Caco-2 (cell line): ENCODE measurements at regions of chr3 and their contacts with region 1.

Region 1: GRCh38 chr3:2770451-2770850 is 339.7 kb downstream of the IL5RA start:
- DNase-seq: peak; percentile 42 to 60
- H3K4me3 ChIP-seq: no peak overlapping the region
- H3K4me3 Mint-ChIP-seq: no peak overlapping the region
- H3K27ac Mint-ChIP-seq: peak overlapping the region; percentile 37
- H3K4me1 ChIP-seq: peaks cover 11% of the 10 kb centered on the region
- H3K4me1 Mint-ChIP-seq: peaks cover 24% of the 10 kb centered on the region
- H3K27me3 ChIP-seq: no peaks in the 10 kb centered on the region
- H3K27me3 Mint-ChIP-seq: no peaks in the 10 kb centered on the region
- CTCF ChIP-seq: no peak

Region 2: GRCh38 chr3:2603692-2604289 is 166.7 kb before region 1 on chr3:
- CTCF ChIA-PET with region 1: no interaction called
- POLR2A ChIA-PET with region 1: no interaction called
- intact Hi-C with region 1: no loop called
- DNase-seq: no peak
- H3K4me3 ChIP-seq: no peak overlapping the region
- H3K4me3 Mint-ChIP-seq: no peak overlapping the region
- H3K27ac Mint-ChIP-seq: no peak overlapping the region
- H3K4me1 ChIP-seq: no peaks in the 10 kb centered on the region
- H3K4me1 Mint-ChIP-seq: no peaks in the 10 kb centered on the region
- H3K27me3 ChIP-seq: no peaks in the 10 kb centered on the region
- H3K27me3 Mint-ChIP-seq: no peaks in the 10 kb centered on the region
- CTCF ChIP-seq: no peak

Region 3: DNA sequence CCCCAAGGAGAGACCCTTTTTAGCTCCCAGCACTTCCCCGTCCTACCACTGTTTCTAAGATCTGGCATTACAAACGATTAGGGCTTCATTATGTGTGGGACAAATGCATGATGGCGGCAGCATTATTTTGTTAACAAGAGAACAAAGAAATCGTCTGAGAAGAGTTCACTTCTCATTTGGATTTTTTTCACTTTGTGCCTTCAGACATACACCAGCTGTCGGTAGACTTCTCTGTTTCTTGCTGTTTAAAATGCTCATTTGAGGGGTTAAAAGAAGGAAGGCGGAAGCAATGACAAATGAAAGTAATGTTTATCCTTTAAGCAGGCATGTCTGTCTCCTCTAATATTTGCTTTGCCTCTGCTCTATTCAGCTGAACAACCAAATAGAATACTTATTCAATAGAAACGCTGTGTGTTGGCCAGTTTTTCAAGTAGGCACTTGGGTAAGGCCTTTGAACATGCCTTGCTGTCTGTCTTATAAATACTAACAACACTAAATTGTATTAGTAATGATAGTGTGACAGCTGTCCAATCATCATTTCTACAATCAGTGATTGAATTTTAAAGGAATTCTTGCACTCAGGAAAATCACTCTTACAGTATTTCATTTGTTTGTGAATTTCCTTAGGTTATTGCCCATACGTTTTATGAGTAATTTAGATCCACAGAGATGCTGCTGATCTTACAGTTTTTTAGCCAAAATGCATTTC is 42.7 kb before region 1 on chr3:
- CTCF ChIA-PET with region 1: no interaction called
- POLR2A ChIA-PET with region 1: no interaction called
- intact Hi-C with region 1: no loop called
- DNase-seq: no peak
- H3K4me3 ChIP-seq: no peak overlapping the region
- H3K4me3 Mint-ChIP-seq: no peak overlapping the region
- H3K27ac Mint-ChIP-seq: no peak overlapping the region
- H3K4me1 ChIP-seq: peaks cover 22% of the 10 kb centered on the region
- H3K4me1 Mint-ChIP-seq: peaks cover 23% of the 10 kb centered on the region
- H3K27me3 ChIP-seq: no peaks in the 10 kb centered on the region
- H3K27me3 Mint-ChIP-seq: no peaks in the 10 kb centered on the region
- CTCF ChIP-seq: no peak

Region 4: DNA sequence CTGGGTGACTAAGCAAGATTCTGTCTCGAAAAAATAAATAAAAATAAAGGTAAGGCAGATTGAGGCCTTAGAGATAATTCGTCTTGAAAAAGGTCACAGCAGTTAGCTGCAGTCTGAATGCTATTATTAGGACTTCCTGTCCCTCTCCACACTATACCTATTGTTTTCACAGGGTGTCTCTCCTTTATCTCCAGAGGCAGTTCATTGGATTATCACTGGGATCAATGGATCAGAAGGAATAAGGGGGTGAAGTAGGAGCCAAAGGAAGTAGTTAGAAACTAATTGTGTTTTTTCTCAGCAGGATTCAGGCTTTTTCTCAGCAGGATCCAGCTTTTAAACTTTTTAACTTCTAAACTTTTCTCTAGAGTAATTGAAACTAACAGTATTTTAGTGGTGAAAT is 12.8 kb after region 1 on chr3:
- CTCF ChIA-PET with region 1: no interaction called
- POLR2A ChIA-PET with region 1: no interaction called
- intact Hi-C with region 1: no loop called
- DNase-seq: no peak
- H3K4me3 ChIP-seq: no peak overlapping the region
- H3K4me3 Mint-ChIP-seq: no peak overlapping the region
- H3K27ac Mint-ChIP-seq: no peak overlapping the region
- H3K4me1 ChIP-seq: no peaks in the 10 kb centered on the region
- H3K4me1 Mint-ChIP-seq: no peaks in the 10 kb centered on the region
- H3K27me3 ChIP-seq: no peaks in the 10 kb centered on the region
- H3K27me3 Mint-ChIP-seq: no peaks in the 10 kb centered on the region
- CTCF ChIP-seq: no peak

Region 5: DNA sequence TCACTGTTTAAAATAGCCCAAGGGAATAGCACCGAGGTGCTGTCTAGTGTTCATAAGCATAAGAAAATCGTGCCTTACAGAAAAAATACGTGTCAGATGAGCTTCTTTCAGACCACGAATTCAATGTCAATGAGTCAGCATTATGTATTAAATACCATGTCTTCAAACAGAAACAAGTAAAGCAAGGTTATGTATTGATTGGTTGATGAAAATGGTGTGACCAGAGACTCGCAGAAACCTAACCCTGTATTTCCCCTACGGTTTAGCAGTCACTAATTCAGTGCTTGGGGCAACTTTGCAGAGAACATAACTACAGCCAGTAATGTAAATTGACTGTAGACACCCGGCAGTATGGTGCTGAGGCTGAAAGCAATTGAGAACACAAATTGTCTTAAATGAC is 32.0 kb after region 1 on chr3:
- CTCF ChIA-PET with region 1: no interaction called
- POLR2A ChIA-PET with region 1: no interaction called
- intact Hi-C with region 1: no loop called
- DNase-seq: no peak
- H3K4me3 ChIP-seq: no peak overlapping the region
- H3K4me3 Mint-ChIP-seq: no peak overlapping the region
- H3K27ac Mint-ChIP-seq: no peak overlapping the region
- H3K4me1 ChIP-seq: no peaks in the 10 kb centered on the region
- H3K4me1 Mint-ChIP-seq: no peaks in the 10 kb centered on the region
- H3K27me3 ChIP-seq: no peaks in the 10 kb centered on the region
- H3K27me3 Mint-ChIP-seq: no peaks in the 10 kb centered on the region
- CTCF ChIP-seq: no peak

Region 6: GRCh38 chr3:2921903-2922302 is 151.5 kb after region 1 on chr3:
- CTCF ChIA-PET with region 1: interaction called, 15 read pairs
- POLR2A ChIA-PET with region 1: no interaction called
- intact Hi-C with region 1: loop called (anchors 1 kb)
- DNase-seq: peak in 1 of 2 experiments; percentile 24
- H3K4me3 ChIP-seq: no peak overlapping the region
- H3K4me3 Mint-ChIP-seq: no peak overlapping the region
- H3K27ac Mint-ChIP-seq: no peak overlapping the region
- H3K4me1 ChIP-seq: no peaks in the 10 kb centered on the region
- H3K4me1 Mint-ChIP-seq: no peaks in the 10 kb centered on the region
- H3K27me3 ChIP-seq: no peaks in the 10 kb centered on the region
- H3K27me3 Mint-ChIP-seq: no peaks in the 10 kb centered on the region
- CTCF ChIP-seq: peak; percentile 40 to 46